ENCODE measurements at regions of chr2 and their contacts with region 1.

Region 1: GRCh38 chr2:224793946-224794345 is 77.8 kb upstream of the CCDC195 start:
- DNase-seq: no peak

Region 2: GRCh38 chr2:224764565-224765236 is 29.2 kb before region 1 on chr2:
- intact Hi-C with region 1: no loop called
- DNase-seq: no peak

Region 3: GRCh38 chr2:224865016-224865415 is 71.1 kb after region 1 on chr2:
- intact Hi-C with region 1: no loop called
- DNase-seq: no peak

Region 4: GRCh38 chr2:225002039-225002655 is 208.2 kb after region 1 on chr2:
- intact Hi-C with region 1: loop called (anchors 10 kb)
- DNase-seq: no peak

Measured in cardiac septum (tissue), 1 donor.